Activated T-helper 1 cell treated with anti-CD3 and anti-CD28 coated beads, Interleukin-12 subunit alpha, Interleukin-12 subunit beta, Interleukin-2, Interleukin-4 antibody, amounts not matched to agents 30 ng/mL and 10 ng/mL and 1 ng/mL, durations not matched to agents 14 hours and 24 hours and 36 hours (primary cell): ENCODE measurements at regions of chr14 and their contacts with region 1.

Region 1: DNA sequence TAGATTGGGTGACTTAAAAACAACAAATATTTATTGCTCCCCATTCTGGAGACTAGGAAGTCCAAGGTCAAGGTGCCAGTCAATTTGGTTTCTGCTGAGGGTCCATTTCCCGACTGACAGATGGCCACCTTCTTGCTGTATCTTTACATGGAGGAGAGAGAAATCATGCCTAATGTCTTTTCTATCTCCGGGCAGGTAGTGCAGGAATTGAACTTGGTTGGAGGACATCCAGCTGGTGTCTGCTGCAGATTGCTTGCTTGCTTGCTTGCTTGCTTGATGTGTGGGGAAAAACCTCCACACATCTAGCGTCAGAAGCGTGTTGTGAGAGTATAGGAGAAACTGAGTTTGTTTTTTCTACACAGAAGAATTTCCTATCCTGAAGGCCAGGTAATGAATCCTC is 561.4 kb downstream of the DIO2 start:
- DNase-seq: no peak
- H3K4me3 Mint-ChIP-seq: no peak overlapping the region
- H3K27ac Mint-ChIP-seq: no peak overlapping the region
- H3K4me1 Mint-ChIP-seq: no peaks in the 10 kb centered on the region
- H3K27me3 Mint-ChIP-seq: no peaks in the 10 kb centered on the region

Region 2: DNA sequence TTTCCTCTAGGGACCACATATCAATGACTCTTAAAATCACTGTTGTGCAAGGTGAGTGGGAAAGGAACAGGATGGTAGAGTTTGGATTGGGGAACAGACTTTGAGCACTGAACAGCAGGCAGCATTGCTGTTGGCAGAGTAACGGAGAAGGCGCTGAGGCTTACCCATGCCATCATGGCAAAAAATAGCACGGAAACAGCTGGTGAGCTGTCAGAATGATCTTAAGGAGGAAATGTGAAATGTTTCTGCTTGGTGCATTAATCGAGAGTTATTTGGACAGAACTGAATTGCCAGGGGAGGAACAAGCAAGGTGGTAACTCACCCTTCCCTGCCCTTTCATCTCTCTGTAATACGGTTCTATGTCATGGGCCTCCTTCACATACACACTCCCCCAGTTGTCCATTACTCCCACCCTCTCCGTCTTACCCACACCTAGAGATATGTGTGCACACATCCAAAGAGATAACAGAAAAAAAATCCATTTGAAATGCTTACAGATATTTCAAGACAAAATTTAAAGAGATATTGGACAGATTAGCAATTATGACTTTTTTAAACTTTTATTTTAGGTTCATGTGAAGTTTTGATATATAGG is 11.1 kb before region 1 on chr14:
- intact Hi-C with region 1: loop called (anchors 1 kb)
- DNase-seq: no peak
- H3K4me3 Mint-ChIP-seq: no peak overlapping the region
- H3K27ac Mint-ChIP-seq: no peak overlapping the region
- H3K4me1 Mint-ChIP-seq: no peaks in the 10 kb centered on the region
- H3K27me3 Mint-ChIP-seq: no peaks in the 10 kb centered on the region